CD8-positive, alpha-beta memory T cell (primary cell): ENCODE measurements at regions of chr1 and their contacts with region 1.

Region 1: DNA sequence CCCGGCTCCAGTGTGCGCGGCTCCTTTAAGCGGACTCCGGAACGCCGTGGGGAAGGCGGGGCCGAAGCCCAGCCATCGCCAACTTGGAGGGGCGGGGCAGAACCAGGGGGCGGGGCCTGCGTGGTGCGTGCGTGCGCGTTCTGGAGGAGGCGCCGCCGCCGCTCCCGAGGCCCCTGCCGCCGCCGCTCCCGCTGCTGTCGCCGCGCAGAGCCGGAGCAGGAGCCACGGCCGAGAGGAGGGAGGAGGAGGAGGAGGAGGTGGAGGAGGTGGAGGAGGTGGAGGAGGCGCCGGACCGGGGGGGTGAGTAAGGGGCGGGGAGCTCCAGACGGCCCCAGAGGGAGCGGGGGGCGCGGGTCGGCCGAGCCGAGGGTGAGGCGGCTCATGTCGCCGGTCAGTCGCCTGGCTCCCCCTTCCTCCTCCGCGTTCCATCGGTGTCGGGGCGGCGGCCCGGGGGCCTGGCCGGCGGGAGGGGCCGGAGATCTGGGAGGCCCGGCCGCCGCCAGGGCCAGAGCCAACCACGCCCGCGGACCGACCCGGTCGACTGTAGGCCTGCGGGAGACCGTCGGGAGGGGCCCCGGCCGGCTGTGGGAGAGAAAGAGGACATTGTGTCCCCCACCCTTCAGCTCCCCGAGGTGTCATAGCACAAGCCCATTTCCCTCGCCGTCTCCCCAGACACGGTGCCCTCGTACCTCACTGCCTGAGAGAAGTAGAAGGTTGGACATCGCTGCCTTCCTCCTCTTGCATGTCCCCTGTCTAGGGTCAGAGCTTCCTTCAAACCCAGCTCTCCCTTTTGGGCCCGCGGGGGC is at the start of gene RAP1A:
- DNase-seq: peak; percentile 86 to 96 (median 93)
- H3K4me3 ChIP-seq: peak within 1 kb of the TSS; percentile 95
- H3K4me3 Mint-ChIP-seq: peak within 1 kb of the TSS; percentile 95 to 100 (median 98)
- H3K27ac ChIP-seq: peak within 1 kb of the TSS; percentile 73
- H3K27ac Mint-ChIP-seq: peak within 1 kb of the TSS; percentile 91 to 99 (median 96)
- H3K4me1 ChIP-seq: peaks cover 78% of the 10 kb centered on the region
- H3K4me1 Mint-ChIP-seq: peaks cover 72 to 82% (median 75%) of the 10 kb centered on the region in 3 donors
- H3K27me3 ChIP-seq: no peaks in the 10 kb centered on the region
- H3K27me3 Mint-ChIP-seq: no peaks in the 10 kb centered on the region
- total RNA-seq, gene RAP1A: 252 to 256 TPM

Region 2: DNA sequence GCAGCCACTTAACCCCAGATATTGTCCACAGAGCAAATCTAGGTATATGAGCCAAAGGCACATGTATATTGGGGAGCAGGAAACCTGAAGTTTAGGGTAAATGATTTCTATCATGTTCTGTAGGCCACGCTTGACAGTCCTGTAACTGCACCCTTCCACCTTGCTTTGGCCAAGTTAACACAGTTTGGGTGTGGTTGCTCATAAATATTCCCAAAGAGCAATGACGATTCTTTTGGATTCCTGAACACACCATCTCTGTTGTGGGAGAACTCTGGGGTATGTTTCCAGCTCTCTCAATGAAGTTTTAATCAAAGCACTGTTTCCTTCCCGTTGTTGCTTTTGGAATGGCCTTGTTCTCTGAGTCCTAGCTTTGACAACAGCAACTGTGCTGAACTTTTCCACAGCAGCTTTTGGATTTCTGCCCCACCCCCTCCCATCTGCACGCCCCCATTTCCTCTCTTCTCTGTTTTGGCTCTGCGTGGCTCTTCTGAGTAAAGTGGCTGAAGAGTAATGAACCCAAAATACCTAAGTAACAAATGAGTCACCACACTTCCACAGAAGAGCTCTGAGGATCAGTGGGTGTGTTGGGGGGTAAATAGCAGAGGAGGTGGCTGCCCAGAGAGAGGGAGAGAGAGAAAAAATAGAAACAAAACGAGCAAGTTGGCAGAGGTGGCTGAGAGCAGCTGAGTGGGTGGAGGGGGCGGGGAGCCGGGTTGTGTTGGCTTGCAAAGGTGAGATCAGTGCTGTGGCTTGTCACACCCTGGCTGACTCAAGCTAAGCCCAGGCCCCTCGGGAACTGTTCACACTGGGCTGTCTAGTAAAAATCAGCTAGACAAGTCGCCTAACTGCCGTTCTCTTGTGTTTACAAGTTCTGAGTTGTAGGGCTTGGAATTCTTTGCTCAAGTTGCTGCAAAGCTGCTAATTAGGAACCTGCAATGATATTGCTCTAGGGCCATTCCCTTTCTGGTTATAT is 27.2 kb before region 1 on chr1:
- CTCF ChIA-PET with region 1: interaction called, 42 read pairs
- POLR2A ChIA-PET with region 1: interaction called, 22 read pairs
- DNase-seq: peak; percentile 61 to 96 (median 83)
- H3K4me3 ChIP-seq: peak overlapping the region; percentile 17
- H3K4me3 Mint-ChIP-seq: peak overlapping the region; percentile 50 to 74 (median 66)
- H3K27ac ChIP-seq: peak overlapping the region; percentile 38
- H3K27ac Mint-ChIP-seq: peak overlapping the region; percentile 74 to 97 (median 88)
- H3K4me1 ChIP-seq: peaks cover 70% of the 10 kb centered on the region
- H3K4me1 Mint-ChIP-seq: peaks cover 56 to 69% (median 64%) of the 10 kb centered on the region in 3 donors
- H3K27me3 ChIP-seq: no peaks in the 10 kb centered on the region
- H3K27me3 Mint-ChIP-seq: no peaks in the 10 kb centered on the region

Region 3: GRCh38 chr1:111603979-111604378 is 15.9 kb before region 1 on chr1:
- CTCF ChIA-PET with region 1: interaction called, 9 read pairs
- POLR2A ChIA-PET with region 1: interaction called, 13 read pairs
- DNase-seq: peak; percentile 54 to 88 (median 79)
- H3K4me3 ChIP-seq: no peak overlapping the region
- H3K4me3 Mint-ChIP-seq: peak overlapping the region in 6 of 7 donors; percentile 66 to 82 (median 70)
- H3K27ac ChIP-seq: no peak overlapping the region
- H3K27ac Mint-ChIP-seq: peak overlapping the region; percentile 85 to 97 (median 92)
- H3K4me1 ChIP-seq: peaks cover 73% of the 10 kb centered on the region
- H3K4me1 Mint-ChIP-seq: peaks cover 72 to 79% (median 77%) of the 10 kb centered on the region in 3 donors
- H3K27me3 ChIP-seq: no peaks in the 10 kb centered on the region
- H3K27me3 Mint-ChIP-seq: no peaks in the 10 kb centered on the region